Posterior cingulate gyrus (tissue), 11 donors: ENCODE measurements at regions of chr2 and their contacts with region 1.

Region 1: DNA sequence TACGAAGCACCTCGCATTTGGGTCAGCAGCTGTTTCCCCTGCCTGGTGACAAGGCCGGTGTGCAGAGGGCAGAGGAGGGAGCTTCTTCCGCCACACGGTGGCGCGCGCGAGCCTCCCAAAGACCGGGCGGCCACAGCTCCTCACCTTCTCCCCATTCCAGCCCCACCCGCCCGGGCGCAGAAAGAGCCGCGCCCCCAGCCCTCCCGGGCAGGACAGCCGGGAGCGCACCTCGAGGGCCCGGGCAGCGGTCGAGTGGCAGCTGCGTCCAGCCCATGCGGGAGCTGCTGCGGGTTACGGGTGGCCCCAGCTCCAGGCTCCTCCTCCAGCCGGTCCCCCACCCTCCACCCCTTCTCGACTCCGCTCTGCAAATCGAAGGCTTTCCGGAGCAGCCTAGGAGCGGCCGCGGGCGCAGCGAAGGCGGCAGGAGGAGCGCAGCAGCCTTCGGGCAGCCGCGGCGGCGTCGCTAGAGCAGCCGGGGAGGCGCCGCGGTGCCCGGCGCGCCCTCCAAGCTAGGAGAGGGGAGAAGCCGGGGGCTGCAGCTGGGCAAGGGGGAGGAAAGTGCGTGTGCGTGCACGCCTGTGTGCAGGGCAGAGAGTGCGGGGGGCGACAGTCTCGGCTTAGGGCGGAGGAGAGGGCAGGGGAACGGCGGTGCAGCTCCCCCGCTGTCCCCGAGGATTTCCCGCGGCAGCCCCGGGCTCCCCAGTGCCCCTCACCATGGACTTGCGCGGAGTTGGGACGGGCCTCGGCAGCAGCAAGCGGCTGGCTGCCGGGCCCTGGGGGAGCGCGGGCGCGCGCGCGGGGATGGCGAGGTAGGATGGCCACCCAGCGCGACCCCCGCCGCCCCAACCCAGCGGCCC is at the start of gene CCDC85A:
- DNase-seq: peak; percentile 71 to 98 (median 87)

Region 2: GRCh38 chr2:55922291-55922907 is 261.5 kb before region 1 on chr2:
- intact Hi-C with region 1: no loop called
- DNase-seq: no peak

Region 3: DNA sequence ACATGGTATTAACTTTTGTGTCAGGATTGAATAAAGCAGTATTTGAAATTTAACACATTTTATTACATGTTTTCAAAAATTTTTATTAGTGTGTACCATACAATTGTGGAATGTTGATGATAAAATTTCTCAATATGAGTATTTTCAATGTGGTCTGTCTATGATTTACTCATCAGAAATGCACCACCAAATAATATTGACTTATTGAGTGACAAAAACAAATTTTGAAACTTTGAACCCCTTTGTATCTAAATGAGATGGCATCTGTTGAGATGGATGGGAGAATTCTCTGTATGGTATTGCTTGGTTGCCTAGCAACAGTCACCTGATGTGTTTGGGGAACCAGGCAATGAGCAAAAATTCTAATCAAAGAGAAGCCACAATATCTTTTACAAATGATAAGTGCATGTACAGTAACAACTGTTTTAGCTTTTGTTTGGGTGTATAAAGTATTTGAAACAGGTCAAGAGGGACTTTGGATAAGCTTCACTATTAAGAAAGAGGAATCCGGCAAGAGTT is 400.0 kb after region 1 on chr2:
- intact Hi-C with region 1: no loop called
- DNase-seq: no peak

Region 4: GRCh38 chr2:56749152-56749752 is 565.4 kb after region 1 on chr2:
- intact Hi-C with region 1: loop called (anchors 5 kb)
- DNase-seq: no peak

Region 5: GRCh38 chr2:57497489-57498096 is 1313.7 kb after region 1 on chr2:
- intact Hi-C with region 1: loop called (anchors 5 kb)
- DNase-seq: peak in 9 of 10 donors; percentile 15 to 86 (median 48)

Region 6: DNA sequence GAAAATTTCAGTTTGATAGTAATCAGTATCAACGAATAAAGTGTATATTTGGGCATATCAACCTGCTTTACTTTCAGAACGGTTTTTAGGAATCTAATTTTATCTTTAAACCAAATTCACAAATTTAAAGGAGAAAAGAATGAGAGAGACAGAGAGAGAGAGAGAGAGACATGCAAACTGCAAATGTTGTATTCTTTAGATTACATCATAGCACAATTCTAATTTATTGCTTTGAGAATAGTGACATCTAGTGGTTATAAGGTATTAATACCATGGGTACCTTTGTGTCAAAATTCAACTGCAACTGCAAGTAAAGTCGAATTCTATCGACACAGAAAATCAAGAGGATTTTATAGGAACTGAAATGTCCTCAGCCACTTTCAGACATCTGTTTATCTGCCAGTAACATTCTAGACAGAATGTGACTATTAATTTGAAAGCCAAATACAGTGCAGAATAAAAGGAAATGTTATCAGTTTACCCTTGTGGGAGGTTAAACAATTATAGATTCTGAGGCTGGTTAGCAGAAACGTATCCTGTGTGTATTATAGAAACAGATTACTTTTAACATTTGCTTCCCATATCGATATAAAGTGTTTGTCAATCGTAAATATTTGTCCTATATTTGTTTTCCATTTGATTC is 1332.9 kb after region 1 on chr2:
- intact Hi-C with region 1: loop called (anchors 1 kb)
- DNase-seq: no peak